ENCODE measurements at regions of chr9 and their contacts with region 1.

Region 1: GRCh38 chr9:69223605-69224004 is 49.5 kb downstream of the TJP2 start:
- DNase-seq: peak in 1 of 2 donors; percentile 22
- ATAC-seq: peak; percentile 62 to 95
- H3K4me3 ChIP-seq: no peak overlapping the region
- H3K27ac ChIP-seq: no peak overlapping the region
- H3K4me1 ChIP-seq: no peaks in the 10 kb centered on the region
- H3K27me3 ChIP-seq: no peaks in the 10 kb centered on the region
- CTCF ChIP-seq: peak; percentile 39 to 69 (median 50)
- POLR2A ChIP-seq: no peak

Region 2: GRCh38 chr9:69279084-69279729 is 55.6 kb after region 1 on chr9:
- in situ Hi-C with region 1: no loop called
- intact Hi-C with region 1: loop called (anchors 10 kb)
- DNase-seq: no peak
- ATAC-seq: no peak
- H3K4me3 ChIP-seq: no peak overlapping the region
- H3K27ac ChIP-seq: no peak overlapping the region
- H3K4me1 ChIP-seq: no peaks in the 10 kb centered on the region
- H3K27me3 ChIP-seq: no peaks in the 10 kb centered on the region
- CTCF ChIP-seq: no peak
- POLR2A ChIP-seq: no peak

Region 3: DNA sequence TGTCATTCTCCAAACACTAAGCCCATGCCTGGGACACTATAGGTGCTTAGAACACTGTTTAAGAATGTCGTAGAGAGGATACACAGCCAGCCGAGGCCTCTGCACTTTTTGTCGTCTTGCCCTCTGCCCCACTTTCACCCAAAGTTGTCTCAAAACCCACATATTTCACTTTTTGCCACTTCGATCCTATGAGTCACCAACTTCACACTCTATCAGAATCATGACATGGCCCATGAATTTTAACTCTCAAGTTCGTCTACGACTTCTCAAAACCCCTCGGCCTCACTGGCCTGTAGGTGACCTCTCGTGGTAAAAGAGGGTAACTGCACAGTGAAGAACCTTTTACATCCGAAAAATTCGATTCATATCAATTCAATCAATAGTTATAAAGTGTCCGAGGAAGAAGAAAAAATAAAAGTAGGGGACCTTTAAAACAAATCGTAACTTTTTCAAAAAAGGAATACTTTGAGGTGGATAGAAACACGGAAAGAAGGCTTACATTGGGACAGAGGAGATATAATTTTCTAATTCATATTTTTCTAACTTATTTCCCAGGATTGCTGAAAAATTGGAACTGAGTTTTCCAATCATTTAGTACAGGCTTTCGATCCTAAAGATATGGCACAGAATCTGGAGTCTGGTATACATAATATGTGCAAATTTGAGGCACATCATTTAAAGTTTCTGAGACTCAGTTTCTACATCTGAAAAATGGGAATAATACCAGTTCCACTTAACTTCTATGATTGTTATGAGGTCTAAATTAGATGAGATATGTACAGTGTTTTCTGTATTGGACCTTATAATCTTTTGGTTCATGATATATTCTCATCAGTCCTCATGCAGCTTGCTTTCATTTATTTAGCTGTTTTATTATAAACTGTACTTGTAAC is 326.0 kb after region 1 on chr9:
- in situ Hi-C with region 1: no loop called
- intact Hi-C with region 1: loop called (anchors 10 kb)
- DNase-seq: no peak
- ATAC-seq: peak; percentile 62 to 64
- H3K4me3 ChIP-seq: no peak overlapping the region
- H3K27ac ChIP-seq: no peak overlapping the region
- H3K4me1 ChIP-seq: peaks cover 1 to 7% of the 10 kb centered on the region in 2 donors
- H3K27me3 ChIP-seq: no peaks in the 10 kb centered on the region
- CTCF ChIP-seq: peak; percentile 72 to 89 (median 79)
- POLR2A ChIP-seq: no peak

Measured in gastrocnemius medialis (tissue), 4 donors.